ENCODE measurements at regions of chr16 and their contacts with region 1.

Region 1: GRCh38 chr16:8674413-8675022 is at the start of gene ABAT:
- DNase-seq: peak; percentile 77
- H3K4me3 ChIP-seq: peak within 1 kb of the TSS; percentile 39 to 51 (median 46)
- H3K27ac ChIP-seq: no peak within 1 kb of the TSS
- H3K4me1 ChIP-seq: peaks cover 6% of the 10 kb centered on the region
- H3K27me3 ChIP-seq: peaks cover 0 to 2% of the 10 kb centered on the region in 2 experiments
- CTCF ChIP-seq: no peak
- POLR2A ChIP-seq: no peak
- total RNA-seq, gene ABAT: 1.3 and 1.6 TPM in 2 replicates

Region 2: DNA sequence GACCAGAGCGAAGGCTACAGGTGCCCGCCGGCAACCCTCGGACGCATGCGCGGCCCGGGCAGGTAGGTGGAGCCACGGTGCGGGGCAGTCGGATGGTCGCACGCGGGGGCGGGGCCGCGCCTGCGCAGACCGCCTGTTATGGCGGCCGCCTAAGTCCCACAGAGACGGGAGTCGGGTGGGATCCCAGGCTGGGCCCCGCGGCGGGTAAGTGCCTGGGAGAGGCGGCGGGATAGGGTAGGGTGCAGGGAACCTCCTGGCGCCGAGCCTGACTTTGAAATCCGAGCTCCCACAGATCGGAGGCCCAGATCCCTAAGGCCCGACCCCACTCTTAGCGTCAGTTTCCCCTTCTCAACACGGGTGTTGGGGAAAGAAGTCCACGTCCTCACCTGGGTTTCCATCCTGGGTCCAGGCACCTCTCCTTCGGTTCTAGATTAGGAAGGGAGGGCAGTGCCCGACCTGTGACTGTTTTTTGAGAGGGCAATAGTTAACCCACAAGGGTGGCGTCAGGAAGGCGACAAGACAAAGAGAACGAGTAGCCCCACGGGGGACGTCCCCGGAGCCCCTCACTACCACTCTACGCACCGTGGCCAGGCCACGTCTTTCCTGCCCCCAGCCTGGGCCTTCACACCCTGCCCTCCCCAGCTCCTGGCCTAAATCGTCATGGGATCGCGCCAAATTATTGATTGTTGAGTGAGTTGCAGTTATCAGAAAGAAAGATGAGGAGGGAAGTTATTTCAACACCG is 52.8 kb before region 1 on chr16 and contains the start of gene METTL22:
- CTCF ChIA-PET with region 1: interaction called, 3 read pairs
- POLR2A ChIA-PET with region 1: no interaction called
- dilution Hi-C with region 1: no loop called
- intact Hi-C with region 1: loop called (anchors 2 kb)
- DNase-seq: peak; percentile 87
- H3K4me3 ChIP-seq: peak within 1 kb of the TSS; percentile 77 to 96 (median 94)
- H3K27ac ChIP-seq: peak within 1 kb of the TSS; percentile 64
- H3K4me1 ChIP-seq: peaks cover 8% of the 10 kb centered on the region
- H3K27me3 ChIP-seq: peaks cover 0 to 9% of the 10 kb centered on the region in 2 experiments
- CTCF ChIP-seq: no peak
- POLR2A ChIP-seq: peak; percentile 88
- total RNA-seq, gene METTL22: 40.3 and 42.0 TPM in 2 replicates

Region 3: DNA sequence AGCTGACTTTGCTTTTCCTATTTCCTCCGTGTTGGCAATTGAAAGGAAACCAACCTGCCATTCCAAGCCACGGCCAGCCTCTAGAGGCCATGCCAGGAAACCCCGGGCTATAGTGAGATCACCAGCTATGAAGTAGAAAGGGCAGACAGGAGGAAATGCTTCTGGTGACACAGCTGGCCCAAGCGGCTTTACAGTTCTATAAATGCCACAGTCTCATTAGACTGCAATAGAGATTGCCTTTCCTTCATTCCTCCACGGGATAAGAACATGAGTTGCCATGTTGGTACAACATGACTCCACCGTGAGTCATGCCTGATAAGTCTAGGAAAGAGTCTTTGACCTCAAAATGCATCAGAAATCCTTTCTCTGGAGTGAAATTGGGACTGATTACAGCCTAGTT is 1122.8 kb after region 1 on chr16:
- CTCF ChIA-PET with region 1: no interaction called
- POLR2A ChIA-PET with region 1: no interaction called
- dilution Hi-C with region 1: no loop called
- intact Hi-C with region 1: no loop called
- DNase-seq: peak; percentile 78
- H3K4me3 ChIP-seq: no peak overlapping the region
- H3K27ac ChIP-seq: peak overlapping the region; percentile 89
- H3K4me1 ChIP-seq: peaks cover 22% of the 10 kb centered on the region
- H3K27me3 ChIP-seq: no peaks in the 10 kb centered on the region
- CTCF ChIP-seq: no peak
- POLR2A ChIP-seq: no peak

Measured in endothelial cell of umbilical vein (primary cell).